ENCODE measurements at regions of chr6 and their contacts with region 1.

Region 1: DNA sequence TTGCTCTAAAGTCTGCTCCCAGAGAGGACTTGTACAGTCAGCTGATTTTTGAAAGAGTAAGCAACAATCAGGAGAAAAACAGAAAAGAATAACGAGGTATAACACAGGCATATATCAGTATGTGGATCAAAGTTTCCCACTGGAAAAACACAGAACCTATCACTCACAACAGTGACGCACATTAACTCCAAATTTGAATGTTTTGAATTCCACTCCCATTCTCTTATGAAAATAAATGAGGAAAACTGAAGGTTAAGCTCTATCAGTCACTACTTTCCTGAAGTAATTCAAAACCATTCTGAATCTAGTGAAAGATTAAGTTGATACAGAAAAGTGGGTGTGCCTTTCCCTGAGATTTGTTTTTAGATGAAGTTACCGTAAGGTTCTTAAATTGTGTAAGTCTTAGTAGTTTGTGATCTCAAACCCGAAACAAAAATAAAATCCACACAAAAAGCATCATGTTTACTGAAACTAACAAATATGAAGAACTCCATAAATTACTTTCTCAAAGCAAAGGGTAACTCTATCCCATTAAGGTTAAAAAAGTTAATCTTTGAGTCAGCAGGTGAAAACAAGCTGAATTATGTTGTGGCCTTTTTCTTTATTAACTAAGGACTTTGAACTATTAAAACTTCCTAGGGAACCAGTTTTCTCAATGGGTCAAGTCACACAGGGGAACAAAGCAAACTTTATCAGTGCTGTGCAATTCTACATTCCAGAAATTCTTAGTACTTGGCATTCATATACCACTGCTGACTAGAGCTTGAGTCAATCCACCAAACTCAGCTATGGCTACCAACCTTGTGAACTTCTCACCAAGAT is 115.7 kb downstream of the OGFRL1 start:
- DNase-seq: peak; percentile 88
- H3K4me3 ChIP-seq: peak overlapping the region; percentile 2 to 43 (median 29)
- H3K27ac ChIP-seq: peak overlapping the region; percentile 93
- H3K4me1 ChIP-seq: peaks cover 65% of the 10 kb centered on the region
- H3K27me3 ChIP-seq: no peaks in the 10 kb centered on the region
- CTCF ChIP-seq: no peak

Region 2: GRCh38 chr6:71393981-71394432 is 10.3 kb before region 1 on chr6:
- CTCF ChIA-PET with region 1: no interaction called
- dilution Hi-C with region 1: no loop called
- in situ Hi-C with region 1: no loop called
- intact Hi-C with region 1: loop called (anchors 1 kb)
- DNase-seq: peak; percentile 72
- H3K4me3 ChIP-seq: no peak overlapping the region
- H3K27ac ChIP-seq: peak overlapping the region; percentile 52
- H3K4me1 ChIP-seq: peaks cover 55% of the 10 kb centered on the region
- H3K27me3 ChIP-seq: no peaks in the 10 kb centered on the region
- CTCF ChIP-seq: no peak

Region 3: GRCh38 chr6:71478834-71479541 is 74.6 kb after region 1 on chr6:
- CTCF ChIA-PET with region 1: interaction called, 3 read pairs
- dilution Hi-C with region 1: loop called (anchors 5 kb)
- in situ Hi-C with region 1: no loop called
- intact Hi-C with region 1: no loop called
- DNase-seq: peak; percentile 85
- H3K4me3 ChIP-seq: no peak overlapping the region
- H3K27ac ChIP-seq: peak overlapping the region; percentile 87
- H3K4me1 ChIP-seq: peaks cover 38% of the 10 kb centered on the region
- H3K27me3 ChIP-seq: no peaks in the 10 kb centered on the region
- CTCF ChIP-seq: no peak